ENCODE measurements at regions of chr1 and their contacts with region 1.

Region 1: DNA sequence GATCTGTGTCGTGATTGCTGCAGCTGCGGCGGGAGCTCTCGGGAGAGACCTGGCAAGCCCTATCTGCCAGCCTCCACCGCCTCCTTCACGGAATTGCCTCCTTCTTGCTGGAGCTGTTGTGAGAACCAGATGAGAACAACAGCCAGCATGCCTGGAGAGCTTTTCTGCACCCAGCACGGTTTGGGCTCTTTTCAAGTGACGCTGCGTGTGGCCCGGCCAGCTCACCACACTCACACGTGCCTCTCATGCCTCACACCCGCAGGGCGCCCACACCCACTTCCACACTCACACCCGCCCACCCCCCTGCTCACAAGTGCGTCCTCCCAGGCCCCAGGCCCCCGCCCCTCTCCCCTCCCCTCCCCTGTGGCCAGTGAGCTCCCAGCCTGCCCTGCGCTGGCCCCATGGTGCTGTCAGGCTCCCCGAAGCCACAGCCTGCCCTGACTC is 135.7 kb upstream of the RUNX3 start:
- DNase-seq: peak; percentile 87 to 91
- ATAC-seq: peak; percentile 75 to 86 (median 85)
- H3K4me3 ChIP-seq: peak overlapping the region; percentile 20
- H3K4me3 Mint-ChIP-seq: peak overlapping the region; percentile 91
- H3K27ac ChIP-seq: peak overlapping the region; percentile 75
- H3K27ac Mint-ChIP-seq: peak overlapping the region; percentile 93 to 95
- H3K4me1 ChIP-seq: peaks cover 79% of the 10 kb centered on the region
- H3K4me1 Mint-ChIP-seq: peaks cover 52 to 71% of the 10 kb centered on the region in 2 donors
- H3K27me3 ChIP-seq: no peaks in the 10 kb centered on the region
- H3K27me3 Mint-ChIP-seq: peaks cover 23 to 24% of the 10 kb centered on the region in 2 donors
- CTCF ChIP-seq: no peak

Region 2: DNA sequence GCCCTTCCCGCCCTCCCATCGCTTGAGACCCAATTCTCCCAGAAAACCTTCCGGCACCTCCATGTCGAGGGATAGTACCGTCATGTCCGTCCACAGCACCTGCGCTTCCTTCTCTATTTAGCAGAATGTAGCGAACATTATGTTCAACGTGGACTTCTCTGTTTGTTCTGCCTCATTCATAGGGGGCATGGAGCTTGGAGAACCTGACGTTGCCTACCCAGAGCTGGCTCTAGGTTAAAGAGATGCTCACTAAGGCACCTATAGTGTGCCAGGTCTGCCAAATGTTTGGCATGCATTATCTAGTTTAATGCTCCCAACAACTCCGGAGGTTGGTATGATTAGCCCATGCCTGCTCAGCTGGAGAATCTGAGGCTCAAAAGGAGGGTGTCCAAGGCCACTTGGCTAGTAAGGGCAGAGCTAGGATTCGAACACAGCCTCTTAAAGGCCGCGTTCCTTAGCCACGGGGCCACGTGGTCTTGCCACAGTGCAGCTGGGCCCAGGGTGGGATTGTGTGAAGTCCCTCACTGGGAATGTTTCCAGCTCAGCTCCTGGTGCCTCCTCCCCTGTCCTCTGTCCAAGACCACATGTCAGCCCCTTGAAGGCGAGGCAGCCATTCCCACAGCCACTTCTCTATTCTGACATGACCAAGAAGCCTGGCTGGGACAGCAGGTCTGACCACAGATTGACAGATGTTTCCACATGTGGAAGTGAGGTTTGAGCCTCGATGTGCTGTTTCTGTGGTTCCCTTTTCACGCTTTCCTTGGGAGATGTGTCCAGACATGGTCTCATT is 193.6 kb before region 1 on chr1:
- intact Hi-C with region 1: no loop called
- DNase-seq: no peak
- ATAC-seq: peak in 1 of 3 donors; percentile 30
- H3K4me3 ChIP-seq: no peak overlapping the region
- H3K4me3 Mint-ChIP-seq: peak overlapping the region; percentile 45
- H3K27ac ChIP-seq: no peak overlapping the region
- H3K27ac Mint-ChIP-seq: peak overlapping the region; percentile 68 to 74
- H3K4me1 ChIP-seq: peaks cover 40% of the 10 kb centered on the region
- H3K4me1 Mint-ChIP-seq: peaks cover 49% of the 10 kb centered on the region in 2 donors
- H3K27me3 ChIP-seq: no peaks in the 10 kb centered on the region
- H3K27me3 Mint-ChIP-seq: no peaks in the 10 kb centered on the region
- CTCF ChIP-seq: no peak

Region 3: DNA sequence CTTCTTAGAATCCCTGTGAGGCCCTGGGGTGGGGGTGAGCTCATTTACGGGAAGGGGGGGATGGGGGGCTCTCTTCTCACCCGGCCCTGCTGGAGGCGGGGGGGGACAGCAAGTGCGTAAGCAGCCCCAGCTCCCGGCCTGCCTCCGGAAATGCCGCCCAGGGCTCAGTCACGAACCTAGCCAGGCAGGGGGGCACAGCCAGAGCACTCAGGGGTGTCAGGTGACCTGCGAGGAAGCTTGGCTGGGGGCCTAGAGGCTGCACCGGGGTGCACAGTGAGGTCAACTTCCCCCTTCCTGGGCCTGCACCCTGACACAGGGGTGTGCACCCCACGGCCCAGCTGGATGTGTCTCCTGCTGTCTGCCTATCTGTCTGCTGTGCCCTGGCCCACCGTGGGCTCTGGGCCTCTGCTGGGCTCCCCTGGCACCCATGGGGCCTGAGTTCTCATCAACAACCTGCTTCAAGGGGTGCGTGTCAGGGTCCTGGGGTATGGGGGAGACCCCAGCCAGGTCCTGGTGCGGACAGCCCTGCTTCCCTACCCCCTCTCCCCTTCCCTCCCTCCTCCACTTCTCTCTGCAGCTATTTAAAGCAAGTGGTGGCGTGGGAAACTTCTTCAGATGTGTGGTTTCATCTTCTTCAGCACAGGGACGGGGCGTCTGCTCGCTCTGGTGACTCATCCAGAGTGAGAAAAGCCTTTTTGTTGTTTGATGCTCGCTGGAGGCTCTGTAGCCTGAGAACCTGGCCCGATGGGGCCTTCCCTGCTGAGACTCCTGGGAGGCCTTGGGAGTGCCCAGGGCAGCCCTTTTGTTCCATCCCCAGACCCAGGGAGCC is 43.2 kb before region 1 on chr1:
- intact Hi-C with region 1: loop called (anchors 2 kb)
- DNase-seq: peak; percentile 90 to 99
- ATAC-seq: peak; percentile 79 to 94 (median 86)
- H3K4me3 ChIP-seq: peak overlapping the region; percentile 17
- H3K4me3 Mint-ChIP-seq: peak overlapping the region; percentile 85
- H3K27ac ChIP-seq: peak overlapping the region; percentile 100
- H3K27ac Mint-ChIP-seq: peak overlapping the region; percentile 93 to 99
- H3K4me1 ChIP-seq: peaks cover 100% of the 10 kb centered on the region
- H3K4me1 Mint-ChIP-seq: peaks cover 42 to 71% of the 10 kb centered on the region in 2 donors
- H3K27me3 ChIP-seq: no peaks in the 10 kb centered on the region
- H3K27me3 Mint-ChIP-seq: no peaks in the 10 kb centered on the region
- CTCF ChIP-seq: no peak

Region 4: GRCh38 chr1:25037174-25038074 is 28.4 kb before region 1 on chr1:
- intact Hi-C with region 1: loop called (anchors 1 kb)
- DNase-seq: peak in 1 of 2 donors; percentile 83
- ATAC-seq: no peak
- H3K4me3 ChIP-seq: no peak overlapping the region
- H3K4me3 Mint-ChIP-seq: no peak overlapping the region
- H3K27ac ChIP-seq: no peak overlapping the region
- H3K27ac Mint-ChIP-seq: peak overlapping the region in 1 of 2 donors; percentile 25
- H3K4me1 ChIP-seq: peaks cover 81% of the 10 kb centered on the region
- H3K4me1 Mint-ChIP-seq: peaks cover 38 to 45% of the 10 kb centered on the region in 2 donors
- H3K27me3 ChIP-seq: no peaks in the 10 kb centered on the region
- H3K27me3 Mint-ChIP-seq: peaks cover 14 to 17% of the 10 kb centered on the region in 2 donors
- CTCF ChIP-seq: peak; percentile 32

Region 5: DNA sequence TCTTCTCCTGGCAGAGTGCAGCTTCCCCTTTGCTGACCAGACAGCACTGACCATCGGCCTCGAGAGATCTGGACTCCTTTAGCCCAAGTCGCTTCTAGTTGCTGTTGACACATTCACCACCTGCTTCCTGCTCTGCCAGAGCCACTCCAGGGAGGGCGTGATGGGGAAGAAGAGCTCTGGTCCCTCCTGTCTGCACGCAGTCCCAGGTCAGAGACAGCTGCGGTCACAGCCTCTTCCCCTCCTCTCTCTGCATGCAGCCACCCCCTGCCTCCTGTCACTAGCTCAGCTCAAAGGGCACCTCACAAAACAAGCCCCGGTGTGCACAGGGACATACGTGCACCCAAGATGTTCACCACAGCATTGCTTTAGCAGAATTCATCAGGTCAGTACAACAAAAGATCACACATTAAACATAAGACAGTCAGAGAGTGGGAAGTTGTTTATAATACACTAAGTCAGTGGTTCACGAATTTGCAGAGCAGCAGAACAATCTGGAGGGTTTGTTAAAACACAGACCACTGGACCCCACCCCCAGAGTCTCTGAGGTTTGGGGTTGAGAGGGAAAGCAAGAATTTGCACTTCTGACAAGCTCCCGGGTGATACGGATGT is 33.6 kb after region 1 on chr1:
- intact Hi-C with region 1: loop called (anchors 1 kb)
- DNase-seq: peak; percentile 64 to 71
- ATAC-seq: peak; percentile 60 to 77 (median 74)
- H3K4me3 ChIP-seq: peak overlapping the region; percentile 2
- H3K4me3 Mint-ChIP-seq: peak overlapping the region; percentile 78
- H3K27ac ChIP-seq: peak overlapping the region; percentile 54
- H3K27ac Mint-ChIP-seq: peak overlapping the region; percentile 75 to 84
- H3K4me1 ChIP-seq: peaks cover 77% of the 10 kb centered on the region
- H3K4me1 Mint-ChIP-seq: peaks cover 65 to 74% of the 10 kb centered on the region in 2 donors
- H3K27me3 ChIP-seq: no peaks in the 10 kb centered on the region
- H3K27me3 Mint-ChIP-seq: peaks cover 30 to 44% of the 10 kb centered on the region in 2 donors
- CTCF ChIP-seq: no peak

Region 6: DNA sequence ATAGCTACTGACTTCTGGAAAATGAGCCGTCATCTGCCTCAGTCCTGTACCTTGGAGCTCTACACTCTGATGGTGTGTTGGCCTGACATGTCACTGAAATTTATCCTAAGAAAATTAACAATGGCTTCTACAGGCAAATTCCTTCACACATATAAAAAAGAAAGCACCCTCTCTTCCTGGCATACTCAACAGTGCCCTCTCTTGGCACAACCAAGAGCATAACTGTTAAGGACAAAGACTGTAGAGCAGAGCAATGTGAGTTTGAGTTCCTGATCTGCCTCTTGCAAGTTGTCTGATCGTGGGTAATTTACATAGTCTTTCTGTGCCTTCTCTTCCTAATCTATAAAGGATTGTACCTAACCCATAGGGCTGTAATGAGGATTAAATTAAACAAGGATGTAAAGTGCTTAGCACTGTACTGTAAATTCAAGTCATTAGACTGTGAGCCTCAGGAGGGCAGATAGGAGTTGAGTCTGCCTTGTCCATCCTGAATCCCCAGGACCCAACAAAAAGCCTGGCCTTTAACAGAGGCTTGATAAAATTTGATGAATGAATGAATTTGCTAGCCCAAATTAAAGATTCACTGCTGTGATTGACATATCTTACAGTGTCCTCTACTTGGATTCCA is 83.0 kb after region 1 on chr1:
- intact Hi-C with region 1: loop called (anchors 5 kb)
- DNase-seq: peak in 1 of 2 donors; percentile 75
- ATAC-seq: peak; percentile 64 to 91 (median 83)
- H3K4me3 ChIP-seq: no peak overlapping the region
- H3K4me3 Mint-ChIP-seq: no peak overlapping the region
- H3K27ac ChIP-seq: no peak overlapping the region
- H3K27ac Mint-ChIP-seq: no peak overlapping the region
- H3K4me1 ChIP-seq: peaks cover 5% of the 10 kb centered on the region
- H3K4me1 Mint-ChIP-seq: peaks cover 8 to 17% of the 10 kb centered on the region in 2 donors
- H3K27me3 ChIP-seq: peaks cover 5% of the 10 kb centered on the region
- H3K27me3 Mint-ChIP-seq: peaks cover 21 to 44% of the 10 kb centered on the region in 2 donors
- CTCF ChIP-seq: peak; percentile 67

Region 7: DNA sequence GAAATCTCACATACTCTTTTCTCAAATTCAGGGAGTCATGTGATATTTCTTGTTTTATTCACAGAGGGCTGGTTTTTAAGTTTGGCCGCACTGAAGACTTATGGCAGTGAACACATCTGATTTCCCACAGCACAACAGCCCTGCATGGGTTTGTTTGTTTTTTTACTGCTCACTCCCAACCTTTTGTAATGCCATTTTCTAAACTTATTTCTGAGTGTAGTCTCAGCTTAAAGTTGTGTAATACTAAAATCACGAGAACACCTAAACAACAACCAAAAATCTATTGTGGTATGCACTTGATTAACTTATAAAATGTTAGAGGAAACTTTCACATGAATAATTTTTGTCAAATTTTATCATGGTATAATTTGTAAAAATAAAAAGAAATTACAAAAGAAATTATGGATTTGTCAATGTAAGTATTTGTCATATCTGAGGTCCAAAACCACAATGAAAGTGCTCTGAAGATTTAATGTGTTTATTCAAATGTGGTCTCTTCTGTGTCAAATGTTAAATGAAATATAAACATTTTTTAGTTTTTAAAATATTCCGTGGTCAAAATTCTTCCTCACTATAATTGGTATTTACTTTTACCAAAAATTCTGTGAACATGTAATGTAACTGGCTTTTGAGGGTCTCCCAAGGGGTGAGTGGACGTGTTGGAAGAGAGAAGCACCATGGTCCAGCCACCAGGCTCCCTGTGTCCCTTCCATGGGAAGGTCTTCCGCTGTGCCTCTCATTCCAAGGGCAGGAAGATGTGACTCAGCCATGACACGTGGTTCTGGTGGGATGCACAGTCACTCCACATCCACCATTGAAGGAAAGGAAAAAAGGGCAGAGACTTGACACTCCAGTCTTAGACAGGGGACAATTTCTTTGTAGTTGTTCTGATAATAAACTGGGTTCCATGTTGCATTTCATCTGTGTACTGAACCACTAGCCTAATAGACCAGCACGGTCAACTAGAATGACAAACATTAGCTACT is 295.1 kb after region 1 on chr1:
- intact Hi-C with region 1: no loop called
- DNase-seq: no peak
- ATAC-seq: no peak
- H3K4me3 ChIP-seq: no peak overlapping the region
- H3K4me3 Mint-ChIP-seq: no peak overlapping the region
- H3K27ac ChIP-seq: no peak overlapping the region
- H3K27ac Mint-ChIP-seq: peak overlapping the region in 1 of 2 donors; percentile 53
- H3K4me1 ChIP-seq: no peaks in the 10 kb centered on the region
- H3K4me1 Mint-ChIP-seq: peaks cover 11 to 17% of the 10 kb centered on the region in 2 donors
- H3K27me3 ChIP-seq: no peaks in the 10 kb centered on the region
- H3K27me3 Mint-ChIP-seq: no peaks in the 10 kb centered on the region
- CTCF ChIP-seq: no peak

Measured in natural killer cell (primary cell).